Tibial artery (tissue), 4 donors: ENCODE measurements at regions of chr14 and their contacts with region 1.

Region 1: GRCh38 chr14:104933746-104934733 is 9.4 kb downstream of the PLD4 start:
- DNase-seq: peak in 1 of 2 donors; percentile 64
- H3K4me3 ChIP-seq: peak overlapping the region; percentile 57 to 73
- H3K27ac ChIP-seq: peak overlapping the region; percentile 67 to 74
- H3K4me1 ChIP-seq: peaks cover 0 to 21% (median 18%) of the 10 kb centered on the region in 4 donors
- H3K27me3 ChIP-seq: no peaks in the 10 kb centered on the region
- CTCF ChIP-seq: no peak

Region 2: DNA sequence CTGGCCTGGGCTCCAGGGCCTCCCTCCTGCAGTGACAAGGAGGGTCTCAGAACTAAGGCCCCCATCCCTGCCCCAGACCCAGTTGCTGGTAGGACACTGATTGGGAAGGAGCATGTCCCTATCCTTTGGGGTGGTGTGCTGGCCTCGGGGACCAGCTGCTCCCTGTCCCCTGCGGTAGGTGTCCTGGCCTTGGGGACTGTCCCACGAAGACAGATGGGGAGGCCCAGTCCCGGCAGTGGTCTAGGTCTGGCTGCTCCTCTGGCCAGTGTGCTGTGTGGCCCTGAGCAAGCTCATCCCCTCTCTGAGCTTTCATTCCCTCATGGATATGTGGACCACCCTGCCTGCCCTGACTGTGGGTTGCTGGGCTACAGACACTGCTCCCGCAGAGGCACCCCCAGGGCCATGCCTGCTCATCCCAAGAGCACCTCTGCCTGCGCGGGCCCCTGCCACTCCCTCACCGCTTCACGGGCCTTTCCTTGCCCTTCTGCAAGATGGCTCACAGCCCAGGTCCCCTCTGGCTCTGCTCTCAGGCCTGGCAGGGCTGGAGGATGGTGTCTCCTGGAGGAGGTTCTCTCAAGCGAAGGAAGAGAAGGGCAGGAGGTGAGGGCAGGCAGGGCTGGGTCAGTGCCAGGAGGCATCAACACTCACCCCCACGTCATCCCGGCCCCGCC is 31.7 kb after region 1 on chr14:
- intact Hi-C with region 1: loop called (anchors 2 kb)
- DNase-seq: peak in 1 of 2 donors; percentile 70
- H3K4me3 ChIP-seq: no peak overlapping the region
- H3K27ac ChIP-seq: peak overlapping the region; percentile 93 to 97
- H3K4me1 ChIP-seq: peaks cover 0 to 44% (median 38%) of the 10 kb centered on the region in 4 donors
- H3K27me3 ChIP-seq: no peaks in the 10 kb centered on the region
- CTCF ChIP-seq: no peak